Body of pancreas (tissue), 4 donors: ENCODE measurements at regions of chr11 and their contacts with region 1.

Region 1: GRCh38 chr11:128882451-128882850 is 8.7 kb upstream of the KCNJ5 start:
- DNase-seq: peak; percentile 56 to 75 (median 68)
- ATAC-seq: peak; percentile 68
- H3K4me3 ChIP-seq: no peak overlapping the region
- H3K27ac ChIP-seq: peak overlapping the region in 2 of 4 donors; percentile 24 to 44
- H3K4me1 ChIP-seq: peaks cover 30% of the 10 kb centered on the region
- H3K27me3 ChIP-seq: no peaks in the 10 kb centered on the region
- CTCF ChIP-seq: no peak
- POLR2A ChIP-seq: no peak

Region 2: DNA sequence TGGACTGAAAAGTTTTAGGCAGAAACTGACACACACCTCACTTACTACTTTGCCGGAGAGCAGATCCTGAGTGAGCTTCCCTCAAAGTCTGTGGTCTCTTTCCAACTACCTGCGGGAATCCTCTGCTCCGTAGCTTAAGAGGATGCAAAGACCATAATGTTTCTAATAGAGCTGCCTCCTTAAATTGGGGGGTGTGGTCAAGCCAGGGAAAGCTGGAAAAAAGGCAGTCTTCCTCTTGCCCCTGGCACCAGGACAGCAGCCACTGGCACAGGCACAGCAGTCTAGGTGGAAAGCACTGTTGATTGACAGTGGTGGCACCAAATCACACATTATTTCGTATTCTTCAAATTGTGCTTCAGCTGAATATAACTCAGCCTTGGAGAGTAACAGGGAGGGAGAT is 295.0 kb before region 1 on chr11 and contains the start of gene ETS1:
- intact Hi-C with region 1: no loop called
- DNase-seq: peak; percentile 39 to 74 (median 65)
- ATAC-seq: peak; percentile 47
- H3K4me3 ChIP-seq: no peak within 1 kb of the TSS
- H3K27ac ChIP-seq: no peak within 1 kb of the TSS
- H3K4me1 ChIP-seq: peaks cover 5% of the 10 kb centered on the region
- H3K27me3 ChIP-seq: no peaks in the 10 kb centered on the region
- CTCF ChIP-seq: no peak
- POLR2A ChIP-seq: no peak
- total RNA-seq, gene ETS1: 20.0 to 22.7 TPM

Region 3: DNA sequence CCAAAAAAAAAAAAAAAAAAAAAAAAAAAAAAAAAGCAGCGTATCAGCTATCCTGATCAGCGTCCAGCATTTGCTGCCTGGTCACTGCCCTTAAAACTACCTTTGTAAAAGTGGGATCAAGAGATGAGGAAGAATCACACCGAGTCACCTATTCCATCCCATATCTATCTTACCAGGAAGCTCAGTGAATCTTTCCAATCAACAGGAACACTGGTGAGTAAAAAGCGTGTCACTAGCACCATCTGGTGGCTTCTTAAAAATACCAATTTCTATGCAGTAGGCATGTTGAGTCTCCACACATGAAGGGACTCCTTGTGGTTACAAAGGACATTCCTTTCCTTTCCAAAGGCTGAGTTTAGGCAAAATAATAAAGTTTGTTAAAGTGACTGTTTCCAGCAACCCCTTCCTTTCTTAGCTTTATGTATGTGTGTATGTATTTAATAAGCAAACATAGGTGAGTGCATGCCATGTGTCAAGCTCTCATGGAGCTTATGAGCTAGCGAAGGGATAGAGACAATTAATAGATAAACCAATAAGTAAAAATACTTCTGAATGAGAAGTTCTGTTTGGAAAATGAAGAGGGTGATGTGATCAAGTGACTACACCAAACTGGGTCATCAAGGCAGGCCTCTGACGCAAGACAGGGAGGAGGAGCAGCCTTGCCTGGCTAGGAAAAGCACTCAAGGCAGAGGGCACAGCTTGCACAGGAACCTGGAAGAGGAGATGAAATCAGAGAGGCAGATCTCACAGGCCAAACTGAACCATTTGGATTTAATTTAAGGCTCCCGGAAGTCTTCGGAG is 74.2 kb after region 1 on chr11:
- intact Hi-C with region 1: loop called (anchors 2 kb)
- DNase-seq: peak; percentile 38 to 72 (median 54)
- ATAC-seq: peak; percentile 86
- H3K4me3 ChIP-seq: no peak overlapping the region
- H3K27ac ChIP-seq: no peak overlapping the region
- H3K4me1 ChIP-seq: peaks cover 7% of the 10 kb centered on the region
- H3K27me3 ChIP-seq: no peaks in the 10 kb centered on the region
- CTCF ChIP-seq: peak; percentile 29 to 92 (median 91)
- POLR2A ChIP-seq: no peak